Heart left ventricle (tissue), 16 donors: ENCODE measurements at regions of chr3 and their contacts with region 1.

Region 1: GRCh38 chr3:140499114-140499757 is 178.6 kb upstream of the TRIM42 start:
- DNase-seq: no peak
- ATAC-seq: peak in 2 of 4 donors; percentile 42 to 54
- H3K4me3 ChIP-seq: no peak overlapping the region
- H3K27ac ChIP-seq: no peak overlapping the region
- H3K4me1 ChIP-seq: peaks cover 0 to 13% (median 0%) of the 10 kb centered on the region in 12 donors
- H3K27me3 ChIP-seq: peaks cover 0 to 12% (median 0%) of the 10 kb centered on the region in 9 donors
- CTCF ChIP-seq: peak in 11 of 12 donors; percentile 8 to 58 (median 40)
- POLR2A ChIP-seq: no peak

Region 2: GRCh38 chr3:139427283-139427993 is 1071.8 kb before region 1 on chr3:
- intact Hi-C with region 1: loop called in 1 of 10 experiments (anchors 5 kb)
- DNase-seq: no peak
- ATAC-seq: peak; percentile 64 to 90 (median 82)
- H3K4me3 ChIP-seq: no peak overlapping the region
- H3K27ac ChIP-seq: no peak overlapping the region
- H3K4me1 ChIP-seq: peaks cover 0 to 5% (median 0%) of the 10 kb centered on the region in 12 donors
- H3K27me3 ChIP-seq: no peaks in the 10 kb centered on the region
- CTCF ChIP-seq: peak; percentile 71 to 88 (median 85)
- POLR2A ChIP-seq: no peak

Region 3: GRCh38 chr3:140128631-140129030 is 370.6 kb before region 1 on chr3:
- intact Hi-C with region 1: loop called in 4 of 10 experiments (anchors 5 to 10 kb)
- DNase-seq: peak in 3 of 5 donors; percentile 13 to 45 (median 43)
- ATAC-seq: peak in 2 of 4 donors; percentile 67 to 76
- H3K4me3 ChIP-seq: no peak overlapping the region
- H3K27ac ChIP-seq: no peak overlapping the region
- H3K4me1 ChIP-seq: no peaks in the 10 kb centered on the region
- H3K27me3 ChIP-seq: peaks cover 0 to 4% (median 0%) of the 10 kb centered on the region in 9 donors
- CTCF ChIP-seq: peak in 11 of 12 donors; percentile 11 to 58 (median 30)
- POLR2A ChIP-seq: no peak

Region 4: DNA sequence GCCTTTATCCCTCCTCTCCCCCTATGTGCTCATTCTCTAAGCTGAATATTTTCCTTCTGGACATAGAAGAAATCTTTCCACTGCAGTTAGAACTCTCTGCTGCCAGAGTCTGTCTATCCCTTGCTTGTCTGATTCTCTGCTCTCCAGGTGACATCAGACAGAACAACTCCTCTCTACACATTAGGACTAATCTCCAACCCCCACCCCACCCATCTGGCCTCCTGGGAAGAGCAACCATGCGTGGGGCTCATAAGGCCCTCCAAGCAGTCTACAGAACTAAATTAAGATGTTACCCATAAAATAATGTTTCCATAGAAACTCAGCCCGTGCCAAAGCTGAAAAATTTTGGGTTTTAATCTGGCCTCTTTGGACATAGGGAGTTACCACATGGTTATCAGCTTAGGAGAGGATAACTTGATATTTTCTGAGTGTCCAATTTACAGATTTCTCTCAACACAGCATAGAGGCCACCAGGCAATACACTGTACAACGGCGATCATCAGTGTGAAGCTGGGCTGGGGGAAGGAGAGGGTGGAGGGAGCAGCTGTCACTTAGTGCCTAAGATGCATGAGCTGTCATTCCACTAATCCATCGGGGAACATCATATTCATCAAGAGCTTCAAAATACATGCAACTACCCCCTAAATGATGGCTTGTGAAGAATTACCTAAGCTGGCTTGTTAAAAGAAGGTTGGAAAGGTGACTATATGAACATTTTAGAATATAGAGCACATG is 364.8 kb before region 1 on chr3:
- intact Hi-C with region 1: loop called in 4 of 10 experiments (anchors 5 to 10 kb)
- DNase-seq: no peak
- ATAC-seq: no peak
- H3K4me3 ChIP-seq: no peak overlapping the region
- H3K27ac ChIP-seq: no peak overlapping the region
- H3K4me1 ChIP-seq: no peaks in the 10 kb centered on the region
- H3K27me3 ChIP-seq: peaks cover 0 to 7% (median 0%) of the 10 kb centered on the region in 9 donors
- CTCF ChIP-seq: no peak
- POLR2A ChIP-seq: no peak

Region 5: GRCh38 chr3:140276703-140277102 is 222.5 kb before region 1 on chr3:
- intact Hi-C with region 1: loop called in 2 of 10 experiments (anchors 10 kb)
- DNase-seq: no peak
- ATAC-seq: peak in 2 of 4 donors; percentile 16 to 45
- H3K4me3 ChIP-seq: no peak overlapping the region
- H3K27ac ChIP-seq: no peak overlapping the region
- H3K4me1 ChIP-seq: no peaks in the 10 kb centered on the region
- H3K27me3 ChIP-seq: no peaks in the 10 kb centered on the region
- CTCF ChIP-seq: peak in 7 of 12 donors; percentile 6 to 47 (median 30)
- POLR2A ChIP-seq: no peak

Region 6: GRCh38 chr3:140292684-140293083 is 206.6 kb before region 1 on chr3:
- intact Hi-C with region 1: loop called in 1 of 10 experiments (anchors 10 kb)
- DNase-seq: peak in 4 of 5 donors; percentile 30 to 79 (median 55)
- ATAC-seq: peak; percentile 53 to 87 (median 55)
- H3K4me3 ChIP-seq: no peak overlapping the region
- H3K27ac ChIP-seq: no peak overlapping the region
- H3K4me1 ChIP-seq: peaks cover 0 to 12% (median 0%) of the 10 kb centered on the region in 12 donors
- H3K27me3 ChIP-seq: no peaks in the 10 kb centered on the region
- CTCF ChIP-seq: no peak
- POLR2A ChIP-seq: no peak

Region 7: DNA sequence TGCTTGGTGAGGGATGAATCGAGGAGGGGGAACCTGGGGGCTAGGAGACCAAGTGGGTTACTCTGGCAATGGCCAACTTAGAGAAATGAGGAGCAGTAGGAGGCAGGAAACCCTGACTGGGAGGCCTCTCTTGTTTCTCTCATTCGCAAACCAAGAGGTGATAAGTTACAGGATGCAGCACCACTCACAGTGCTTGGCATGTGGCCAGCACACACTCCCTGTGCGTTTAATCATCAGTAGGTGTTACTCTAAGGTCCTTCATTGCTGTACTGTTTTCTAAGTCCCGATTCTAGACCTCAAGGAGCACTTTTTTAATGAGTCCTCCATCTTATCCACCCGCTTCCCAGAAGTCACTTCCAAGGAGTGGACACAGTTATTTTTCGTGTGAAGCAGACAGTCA is 135.4 kb before region 1 on chr3:
- intact Hi-C with region 1: loop called in 1 of 10 experiments (anchors 10 kb)
- DNase-seq: peak in 3 of 5 donors; percentile 34 to 58 (median 42)
- ATAC-seq: peak in 3 of 4 donors; percentile 51 to 70 (median 57)
- H3K4me3 ChIP-seq: no peak overlapping the region
- H3K27ac ChIP-seq: no peak overlapping the region
- H3K4me1 ChIP-seq: peaks cover 0 to 8% (median 0%) of the 10 kb centered on the region in 12 donors
- H3K27me3 ChIP-seq: peaks cover 0 to 3% (median 0%) of the 10 kb centered on the region in 9 donors
- CTCF ChIP-seq: no peak
- POLR2A ChIP-seq: no peak

Region 8: GRCh38 chr3:140403608-140404007 is 95.6 kb before region 1 on chr3:
- intact Hi-C with region 1: no loop called
- DNase-seq: no peak
- ATAC-seq: no peak
- H3K4me3 ChIP-seq: no peak overlapping the region
- H3K27ac ChIP-seq: no peak overlapping the region
- H3K4me1 ChIP-seq: no peaks in the 10 kb centered on the region
- H3K27me3 ChIP-seq: no peaks in the 10 kb centered on the region
- CTCF ChIP-seq: no peak
- POLR2A ChIP-seq: no peak